Breast epithelium (tissue), 4 donors: ENCODE measurements at regions of chr4 and their contacts with region 1.

Region 1: DNA sequence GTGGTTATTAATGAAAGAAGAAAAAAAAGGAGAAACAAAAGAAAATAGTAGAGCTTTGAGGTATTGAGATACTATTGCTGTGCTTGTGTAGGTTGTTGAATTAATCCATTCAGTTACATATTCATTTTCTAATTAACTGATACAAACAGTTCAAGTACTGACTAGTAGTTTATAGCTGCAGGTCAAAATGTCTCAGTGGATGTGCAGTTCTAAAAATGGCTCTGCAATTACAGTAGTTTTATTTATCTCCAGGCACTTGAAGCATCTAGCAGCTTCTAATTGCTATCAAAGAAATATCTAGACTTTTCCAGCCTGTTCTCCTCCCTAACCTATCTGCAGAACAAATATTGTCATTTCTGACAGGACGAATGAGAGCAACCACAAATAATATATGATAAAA is 1887.7 kb upstream of the PCDH7 start:
- DNase-seq: no peak
- H3K4me3 ChIP-seq: no peak overlapping the region
- H3K27ac ChIP-seq: no peak overlapping the region
- H3K4me1 ChIP-seq: no peaks in the 10 kb centered on the region
- H3K27me3 ChIP-seq: no peaks in the 10 kb centered on the region
- CTCF ChIP-seq: no peak
- POLR2A ChIP-seq: no peak

Region 2: DNA sequence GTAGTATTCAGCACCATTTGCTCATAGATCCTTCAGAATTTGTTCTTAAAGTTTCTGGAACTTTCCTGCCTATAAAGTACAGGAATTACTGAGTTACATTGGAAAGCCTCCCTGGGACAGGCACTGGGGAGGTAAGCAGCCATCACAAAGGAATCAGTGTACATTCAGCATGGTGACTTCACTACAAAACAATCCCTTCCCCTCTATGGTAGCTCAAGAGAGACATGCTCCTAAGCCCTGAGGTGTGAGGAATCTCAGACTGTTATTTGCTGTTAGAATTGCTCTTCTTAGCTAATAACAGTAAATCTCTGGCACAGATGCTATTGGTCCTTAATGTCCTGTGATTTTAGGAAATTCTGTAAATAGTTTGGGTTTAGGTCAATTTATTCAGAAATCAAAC is 10.3 kb before region 1 on chr4:
- intact Hi-C with region 1: loop called (anchors 1 kb)
- DNase-seq: no peak
- H3K4me3 ChIP-seq: no peak overlapping the region
- H3K27ac ChIP-seq: no peak overlapping the region
- H3K4me1 ChIP-seq: no peaks in the 10 kb centered on the region
- H3K27me3 ChIP-seq: no peaks in the 10 kb centered on the region
- CTCF ChIP-seq: no peak
- POLR2A ChIP-seq: no peak